Activated B cell treated with CpG ODN at 0.5 μM for 24 hours (primary cell): ENCODE measurements at regions of chr12 and their contacts with region 1.

Region 1: DNA sequence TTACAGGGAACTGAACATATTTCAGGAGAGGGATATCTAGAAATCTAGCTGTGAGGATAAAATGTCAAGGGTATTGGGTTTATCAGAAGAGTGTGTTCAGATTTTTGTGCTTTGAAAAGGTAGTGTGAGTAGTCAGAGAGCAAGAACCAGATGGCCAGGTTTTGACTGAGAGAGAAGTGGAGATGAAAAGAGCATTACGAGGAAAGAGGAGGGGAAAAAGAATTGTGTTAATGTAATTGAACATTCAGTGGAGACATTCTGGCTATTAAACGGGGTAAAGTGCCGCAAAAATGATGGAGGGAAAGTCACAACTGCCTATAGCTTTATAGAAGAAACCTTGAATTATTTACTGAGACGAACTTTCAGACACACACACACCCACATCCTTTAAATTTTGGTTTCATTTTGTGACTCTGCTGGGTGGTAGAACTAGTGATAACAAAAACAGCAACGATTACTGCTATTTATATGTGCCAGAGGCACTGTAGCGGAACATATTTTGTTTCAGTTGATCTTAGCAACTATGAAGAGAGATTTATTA is 213.6 kb downstream of the ERC1 start:
- DNase-seq: no peak
- ATAC-seq: peak; percentile 87
- H3K4me3 Mint-ChIP-seq: no peak overlapping the region
- H3K27ac Mint-ChIP-seq: no peak overlapping the region
- H3K4me1 Mint-ChIP-seq: peaks cover 39% of the 10 kb centered on the region
- H3K27me3 Mint-ChIP-seq: no peaks in the 10 kb centered on the region
- CTCF ChIP-seq: no peak

Region 2: DNA sequence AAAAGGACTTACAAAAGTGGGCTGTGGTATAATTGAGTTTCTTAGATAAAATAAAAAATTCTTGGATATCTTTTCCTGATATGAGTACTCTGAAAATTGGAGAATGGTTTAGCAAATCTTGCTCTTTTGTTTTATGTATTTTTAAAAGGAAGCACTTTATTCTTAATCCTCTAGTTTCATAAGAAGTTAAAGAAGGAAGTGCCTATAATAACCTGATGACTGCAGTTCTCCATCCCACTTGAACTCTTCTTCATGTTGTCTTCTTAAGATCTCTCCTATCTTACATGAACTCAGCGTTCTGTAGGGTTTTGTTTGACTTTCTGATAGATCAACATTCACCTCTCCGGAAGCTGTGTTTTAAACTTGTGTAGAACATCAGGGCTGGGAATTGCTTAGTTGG is 57.4 kb after region 1 on chr12:
- CTCF ChIA-PET with region 1: no interaction called
- POLR2A ChIA-PET with region 1: interaction called, 14 read pairs
- intact Hi-C with region 1: no loop called
- DNase-seq: no peak
- ATAC-seq: no peak
- H3K4me3 Mint-ChIP-seq: no peak overlapping the region
- H3K27ac Mint-ChIP-seq: no peak overlapping the region
- H3K4me1 Mint-ChIP-seq: peaks cover 6% of the 10 kb centered on the region
- H3K27me3 Mint-ChIP-seq: no peaks in the 10 kb centered on the region
- CTCF ChIP-seq: no peak

Region 3: DNA sequence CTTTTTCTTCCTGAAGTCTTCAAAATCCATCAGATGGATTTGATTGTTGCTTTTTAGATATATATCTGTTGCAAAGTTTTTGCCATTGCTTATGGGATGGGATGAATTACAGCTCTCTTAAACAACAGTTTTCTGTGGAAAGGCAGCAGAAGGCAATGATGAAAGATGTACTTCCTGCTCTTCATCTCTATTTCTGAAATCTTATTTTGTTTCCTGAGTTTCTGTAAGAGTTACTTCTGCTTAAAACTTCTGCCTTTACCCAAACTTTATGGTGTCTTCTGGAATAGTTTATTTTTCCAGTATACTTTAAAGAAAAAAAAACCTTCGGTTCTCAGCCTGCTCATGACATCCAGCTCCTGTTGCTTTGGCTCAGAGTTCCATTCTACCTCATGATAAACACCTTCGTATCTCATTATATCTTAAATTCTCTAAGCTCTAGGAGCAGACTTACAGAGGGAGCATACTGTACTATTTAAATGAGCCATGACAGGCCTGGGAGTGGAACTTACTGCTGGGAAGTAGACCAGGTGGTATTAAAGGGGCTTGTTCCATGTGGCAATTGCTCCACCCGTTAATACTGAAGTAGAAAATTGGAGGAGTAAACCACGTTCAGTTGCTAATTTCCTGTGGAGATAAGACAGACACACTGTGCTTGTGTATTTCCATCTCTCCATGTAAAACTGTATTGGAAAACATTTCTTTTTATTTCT is 101.3 kb after region 1 on chr12:
- CTCF ChIA-PET with region 1: no interaction called
- POLR2A ChIA-PET with region 1: no interaction called
- intact Hi-C with region 1: no loop called
- DNase-seq: no peak
- ATAC-seq: no peak
- H3K4me3 Mint-ChIP-seq: no peak overlapping the region
- H3K27ac Mint-ChIP-seq: no peak overlapping the region
- H3K4me1 Mint-ChIP-seq: peaks cover 12% of the 10 kb centered on the region
- H3K27me3 Mint-ChIP-seq: no peaks in the 10 kb centered on the region
- CTCF ChIP-seq: no peak